Ascending aorta (tissue), 2 donors: ENCODE measurements at regions of chr2 and their contacts with region 1.

Region 1: DNA sequence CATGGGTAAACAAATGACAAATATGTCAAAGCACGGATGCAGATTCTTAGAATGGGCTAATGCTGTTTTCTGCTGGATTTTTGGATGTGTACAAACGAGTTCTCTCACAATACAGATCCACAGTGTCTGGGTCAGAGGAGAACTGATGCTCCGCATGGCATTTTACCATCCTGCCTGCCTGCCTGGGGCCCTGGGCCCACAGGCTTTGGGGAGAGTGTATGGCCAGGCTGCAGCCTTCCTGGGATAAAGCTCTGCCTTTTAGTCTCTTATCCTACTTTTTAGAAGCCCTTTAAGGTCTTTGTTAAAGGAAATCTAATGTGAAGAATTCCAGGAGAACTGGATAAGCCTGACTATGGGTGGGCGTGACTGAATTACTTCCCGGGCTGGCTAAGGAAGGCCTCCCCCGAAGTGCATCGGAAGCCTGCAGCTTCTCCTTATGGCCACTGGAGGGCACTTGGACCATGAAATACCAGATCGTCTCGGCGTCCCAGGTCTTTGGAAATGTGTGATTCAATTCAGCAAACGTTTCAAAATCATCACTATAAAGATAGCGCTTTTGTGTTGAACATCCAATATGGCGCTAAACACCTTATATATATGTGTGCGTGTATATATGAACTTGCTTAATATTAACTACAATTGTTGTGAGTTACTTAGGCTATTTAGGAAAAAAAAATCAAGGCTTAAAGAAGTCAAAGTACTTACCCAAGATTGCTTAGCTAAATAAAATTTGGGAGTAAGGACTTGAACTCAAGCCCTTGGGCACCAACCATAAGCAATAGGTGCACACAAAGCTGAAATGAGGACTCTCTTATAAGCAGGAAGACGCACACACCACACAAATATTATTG is 15.2 kb upstream of the DNPEP start:
- DNase-seq: peak in 1 of 2 donors; percentile 88
- H3K4me3 ChIP-seq: no peak overlapping the region
- H3K27ac ChIP-seq: peak overlapping the region; percentile 88 to 94
- H3K4me1 ChIP-seq: peaks cover 23 to 42% of the 10 kb centered on the region in 2 donors
- H3K27me3 ChIP-seq: no peaks in the 10 kb centered on the region
- CTCF ChIP-seq: peak; percentile 90 to 95 (median 93)

Region 2: GRCh38 chr2:219344751-219345430 is 58.0 kb before region 1 on chr2:
- intact Hi-C with region 1: no loop called
- DNase-seq: no peak
- H3K4me3 ChIP-seq: no peak overlapping the region
- H3K27ac ChIP-seq: no peak overlapping the region
- H3K4me1 ChIP-seq: no peaks in the 10 kb centered on the region
- H3K27me3 ChIP-seq: no peaks in the 10 kb centered on the region
- CTCF ChIP-seq: no peak

Region 3: DNA sequence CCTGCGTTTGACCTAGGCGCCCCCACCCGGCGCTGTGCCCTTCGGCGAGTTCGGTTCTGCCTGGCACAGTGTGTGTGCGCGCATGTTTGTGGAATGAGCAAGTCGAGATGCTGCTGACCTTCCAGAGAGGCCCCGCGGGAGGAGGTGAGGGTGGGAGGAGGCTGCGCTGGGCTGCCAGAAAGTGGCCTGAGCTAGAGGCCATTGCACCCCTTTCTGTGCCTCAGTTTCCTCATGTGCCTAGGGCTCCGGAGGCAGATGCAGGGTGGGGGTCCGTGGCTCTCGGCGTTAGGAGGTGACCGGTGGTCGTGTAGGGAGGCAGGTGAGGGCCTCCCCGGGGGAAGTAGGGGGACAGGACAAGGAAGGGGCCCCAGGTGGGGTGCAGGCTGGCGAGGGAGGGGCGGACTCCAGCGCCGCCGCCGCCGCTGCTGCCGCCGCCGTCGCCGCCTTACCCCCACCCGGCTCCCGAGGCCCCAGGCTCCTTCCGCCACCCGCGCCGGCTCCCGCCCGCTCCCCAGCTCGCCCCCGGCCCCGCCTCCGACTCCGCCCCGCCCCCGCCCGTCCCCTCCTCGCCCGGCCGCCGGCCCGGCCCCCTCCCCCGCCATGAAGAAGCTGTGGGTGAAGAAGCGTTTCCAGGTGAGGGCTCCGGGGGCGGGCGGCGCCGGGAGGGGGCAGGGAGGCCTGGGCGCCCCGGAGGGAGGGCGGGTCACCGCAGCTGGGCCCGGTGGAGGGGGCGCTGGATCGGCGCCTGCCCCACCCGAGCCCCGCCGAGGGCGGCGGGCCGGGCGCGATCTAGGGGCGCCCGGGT is 38.8 kb after region 1 on chr2:
- intact Hi-C with region 1: loop called (anchors 5 kb)
- DNase-seq: peak in 1 of 2 donors; percentile 89
- H3K4me3 ChIP-seq: peak overlapping the region; percentile 85 to 89
- H3K27ac ChIP-seq: peak overlapping the region; percentile 91 to 94
- H3K4me1 ChIP-seq: peaks cover 4 to 45% of the 10 kb centered on the region in 2 donors
- H3K27me3 ChIP-seq: no peaks in the 10 kb centered on the region
- CTCF ChIP-seq: no peak

Region 4: GRCh38 chr2:219475697-219476651 is 73.1 kb after region 1 on chr2:
- intact Hi-C with region 1: loop called (anchors 1 kb)
- DNase-seq: peak in 1 of 2 donors; percentile 81
- H3K4me3 ChIP-seq: no peak overlapping the region
- H3K27ac ChIP-seq: peak overlapping the region; percentile 51 to 73
- H3K4me1 ChIP-seq: no peaks in the 10 kb centered on the region
- H3K27me3 ChIP-seq: no peaks in the 10 kb centered on the region
- CTCF ChIP-seq: peak; percentile 67 to 88 (median 87)

Region 5: GRCh38 chr2:219530048-219530963 is 127.4 kb after region 1 on chr2:
- intact Hi-C with region 1: loop called (anchors 1 kb)
- DNase-seq: peak in 1 of 2 donors; percentile 88
- H3K4me3 ChIP-seq: peak overlapping the region in 1 of 2 donors; percentile 55
- H3K27ac ChIP-seq: no peak overlapping the region
- H3K4me1 ChIP-seq: no peaks in the 10 kb centered on the region
- H3K27me3 ChIP-seq: no peaks in the 10 kb centered on the region
- CTCF ChIP-seq: peak; percentile 97 to 99 (median 98)

Region 6: DNA sequence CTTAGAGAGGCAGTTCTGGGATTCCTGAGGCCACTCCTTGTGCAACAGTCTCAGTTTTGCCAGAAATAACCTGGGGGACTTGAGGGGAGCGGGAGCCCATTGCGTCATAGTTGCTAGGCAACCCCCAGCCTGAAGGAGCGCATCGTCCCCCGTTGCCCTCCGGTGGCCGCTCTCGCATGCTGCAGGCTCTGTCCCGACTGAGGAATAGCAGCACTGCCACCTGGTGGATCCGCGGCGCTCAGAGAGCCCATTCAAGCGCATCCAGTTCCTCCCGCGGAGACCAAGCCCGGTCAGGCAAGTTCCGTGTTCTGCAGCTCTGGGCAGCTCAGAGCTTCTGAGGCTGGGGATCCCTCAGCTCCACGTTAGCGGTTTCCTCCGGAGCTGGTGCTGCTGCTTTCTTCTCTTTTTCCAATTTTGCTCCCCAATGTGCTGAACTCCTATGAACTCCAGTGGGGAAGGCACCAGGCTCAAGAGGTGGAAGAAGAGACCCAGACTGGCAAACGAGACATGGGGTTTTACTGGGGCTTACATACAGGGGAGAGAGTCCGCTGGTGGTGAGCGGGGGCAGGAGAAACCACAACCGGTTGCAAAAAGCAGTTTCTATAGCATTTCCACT is 239.7 kb after region 1 on chr2:
- intact Hi-C with region 1: loop called (anchors 5 kb)
- DNase-seq: peak; percentile 90 to 99
- H3K4me3 ChIP-seq: no peak overlapping the region
- H3K27ac ChIP-seq: no peak overlapping the region
- H3K4me1 ChIP-seq: peaks cover 0 to 12% of the 10 kb centered on the region in 2 donors
- H3K27me3 ChIP-seq: no peaks in the 10 kb centered on the region
- CTCF ChIP-seq: peak; percentile 99 to 100 (median 99)